ENCODE measurements at regions of chr7 and their contacts with region 1.

Region 1: DNA sequence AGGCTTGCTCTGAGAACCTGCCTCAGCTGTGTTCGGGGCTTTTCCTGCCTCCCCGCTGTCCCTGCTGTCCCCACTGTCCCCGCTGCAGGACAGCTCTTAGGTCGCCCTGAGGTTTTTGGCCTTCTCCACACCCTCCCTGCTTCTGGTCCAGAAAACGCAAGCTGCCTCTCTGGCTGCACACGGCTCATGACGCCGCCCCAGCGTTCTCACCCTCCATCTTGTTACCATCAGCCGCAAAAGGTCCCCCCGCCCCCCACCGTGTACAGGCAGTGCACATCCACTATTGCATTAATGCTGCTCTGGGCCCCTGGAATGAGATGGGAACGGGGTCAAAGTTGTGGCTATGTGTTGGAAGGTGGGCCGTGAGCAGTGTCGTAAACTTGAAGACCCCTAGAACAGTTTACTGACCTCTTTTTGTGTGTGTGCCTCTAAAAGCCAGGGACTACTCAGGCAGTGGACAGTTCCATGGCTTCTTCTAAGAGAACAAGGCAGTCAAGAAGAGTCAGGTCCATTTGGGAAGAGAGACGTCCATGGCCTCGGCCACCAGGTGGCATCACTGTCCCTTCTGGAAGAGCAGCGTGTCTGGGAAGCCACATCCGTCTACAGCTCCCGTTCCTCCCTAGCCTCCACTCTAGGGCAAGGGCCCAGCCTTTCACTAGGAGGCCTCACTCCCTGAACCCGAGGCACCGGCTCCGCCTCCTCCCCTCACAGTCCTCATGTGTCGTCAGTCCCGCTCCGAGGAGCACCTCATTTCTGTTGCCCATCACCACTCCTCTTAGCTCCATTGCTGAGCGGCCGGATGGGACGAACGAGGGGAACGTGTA is 38.5 kb upstream of the MKRN1 start:
- DNase-seq: peak; percentile 92

Region 2: GRCh38 chr7:140479062-140479738 is 38.6 kb before region 1 on chr7 and contains the start of gene MKRN1:
- intact Hi-C with region 1: loop called (anchors 5 kb)
- DNase-seq: peak; percentile 98
- total RNA-seq, gene MKRN1: 95.0 TPM

Region 3: DNA sequence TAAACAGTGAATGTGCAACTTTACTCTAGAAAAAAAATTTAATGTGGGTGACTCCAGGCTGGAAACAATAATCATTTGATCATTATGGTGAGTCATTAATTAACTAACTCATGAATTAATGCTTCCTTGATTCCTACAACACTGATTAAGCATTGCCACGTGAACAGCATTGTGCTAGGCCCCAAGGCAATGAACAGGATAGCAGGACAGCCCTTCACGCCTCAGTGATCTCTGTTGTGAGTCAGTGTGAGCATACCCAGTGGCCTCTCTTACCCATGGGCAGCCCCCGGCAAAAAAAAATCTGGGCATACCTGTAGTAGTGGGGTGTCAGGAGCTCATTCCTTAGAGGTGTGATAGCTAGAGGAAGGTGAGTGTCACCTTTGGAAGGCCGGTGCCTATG is 46.9 kb after region 1 on chr7:
- intact Hi-C with region 1: loop called (anchors 5 kb)
- DNase-seq: peak; percentile 20

Region 4: DNA sequence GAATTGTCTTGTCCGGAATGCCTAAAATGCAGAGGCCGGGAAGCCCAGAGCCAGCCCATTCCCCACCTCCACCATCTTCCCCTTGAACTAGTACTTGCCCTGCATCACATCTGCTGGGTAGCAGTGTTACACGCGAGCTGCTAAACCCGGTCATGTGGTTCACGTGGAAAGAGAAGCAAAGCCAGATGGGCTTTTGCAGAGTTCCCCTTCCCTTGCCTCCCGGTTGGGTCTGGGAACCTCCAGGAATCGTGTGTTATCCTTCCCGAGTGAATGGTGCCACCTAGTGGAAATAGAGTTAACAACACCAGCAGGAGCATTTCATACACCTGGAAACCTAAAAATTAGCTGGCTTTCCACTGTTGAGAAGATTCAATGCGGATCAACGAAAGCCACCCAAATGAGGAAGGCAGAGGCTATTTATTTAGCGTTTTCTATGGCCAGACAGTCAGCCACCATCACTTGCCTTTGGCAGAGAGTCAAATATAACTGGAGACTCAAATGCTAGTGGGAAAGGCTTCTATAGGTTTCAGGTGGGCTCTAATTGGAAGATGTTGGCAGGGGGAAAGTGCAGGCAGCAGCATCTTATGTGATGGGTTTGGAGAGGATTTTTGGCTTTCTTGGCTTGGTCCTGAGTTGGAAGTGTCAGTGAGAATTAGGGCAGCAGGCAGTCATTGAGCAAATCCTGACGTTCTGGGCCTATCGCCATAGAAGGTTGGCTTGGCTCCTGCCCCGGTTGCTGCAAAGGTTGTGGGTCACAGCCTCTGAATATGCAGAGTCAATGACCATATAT is 135.8 kb after region 1 on chr7:
- intact Hi-C with region 1: loop called (anchors 1 kb)
- DNase-seq: peak; percentile 77

Region 5: DNA sequence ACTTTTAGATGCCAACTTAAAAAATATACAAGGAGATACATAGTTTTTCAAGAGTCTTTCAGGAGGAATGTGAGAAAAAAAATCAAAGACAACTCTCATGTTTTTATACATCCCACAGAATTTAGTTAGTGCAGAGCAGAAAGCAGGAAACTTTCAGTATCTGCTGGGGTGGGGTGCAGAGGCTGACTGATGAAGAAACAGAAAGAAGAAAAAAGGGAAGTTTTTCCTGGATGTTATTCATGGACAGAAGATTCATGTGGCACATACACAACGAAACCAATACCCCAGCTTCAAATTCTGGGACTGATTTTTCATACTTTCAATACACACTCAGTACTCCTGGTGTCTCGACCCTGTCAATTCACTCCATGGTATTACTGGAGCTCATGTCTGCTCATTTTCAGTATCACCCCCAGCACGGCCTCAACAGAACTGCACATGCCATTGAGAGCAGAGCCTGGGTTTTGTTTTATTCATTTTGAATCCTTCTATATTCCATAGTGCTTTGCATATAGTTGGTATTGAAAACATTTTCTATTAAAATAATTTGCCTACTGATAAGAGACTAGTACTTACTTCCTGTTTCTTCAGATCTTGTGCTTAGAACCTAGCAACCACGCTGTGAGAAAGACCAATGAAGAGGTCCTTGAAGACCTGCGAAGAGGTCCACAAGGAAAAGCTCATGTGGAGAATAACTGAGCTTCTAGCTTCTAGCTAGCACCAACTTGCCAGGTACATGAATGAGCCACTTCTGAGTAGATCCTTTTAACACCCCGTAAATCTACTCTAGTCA is 227.7 kb after region 1 on chr7:
- intact Hi-C with region 1: no loop called
- DNase-seq: no peak